ENCODE measurements at regions of chr3 and their contacts with region 1.

Region 1: DNA sequence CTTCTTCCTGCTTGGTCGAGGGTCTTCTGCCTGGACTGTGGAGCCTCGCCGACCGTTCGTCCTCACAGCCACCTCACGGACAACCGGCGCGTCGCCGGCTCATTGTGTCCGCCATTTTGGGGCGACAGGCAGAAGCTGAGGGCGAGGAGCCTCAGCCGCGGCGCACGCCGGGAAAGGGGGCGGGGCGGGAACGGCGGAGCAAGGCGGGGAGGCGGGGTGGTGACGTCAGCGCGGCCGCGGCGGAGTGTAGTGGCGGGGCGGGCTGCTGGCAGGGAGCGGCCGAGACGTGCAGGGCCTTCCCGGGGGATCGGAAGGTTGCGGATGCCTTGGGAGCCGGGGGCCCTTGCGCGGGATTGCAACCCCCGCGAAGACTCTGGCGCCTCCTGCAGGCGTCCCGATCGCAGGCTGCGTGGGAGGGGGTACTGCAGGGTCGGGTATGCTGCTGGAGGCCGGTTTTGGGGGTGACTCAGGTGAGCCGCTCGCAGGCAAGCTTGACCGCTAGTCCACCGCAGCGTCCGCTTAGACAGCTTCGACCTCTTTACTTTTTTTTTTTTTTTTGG is at the start of gene WDR82:
- DNase-seq: peak; percentile 98
- ATAC-seq: peak; percentile 72
- H3K4me3 Mint-ChIP-seq: peak within 1 kb of the TSS; percentile 99
- H3K27ac Mint-ChIP-seq: peak within 1 kb of the TSS; percentile 96
- H3K4me1 Mint-ChIP-seq: peaks cover 50% of the 10 kb centered on the region
- H3K27me3 Mint-ChIP-seq: no peaks in the 10 kb centered on the region
- CTCF ChIP-seq: peak; percentile 69
- total RNA-seq, gene WDR82: 103 to 105 TPM

Region 2: DNA sequence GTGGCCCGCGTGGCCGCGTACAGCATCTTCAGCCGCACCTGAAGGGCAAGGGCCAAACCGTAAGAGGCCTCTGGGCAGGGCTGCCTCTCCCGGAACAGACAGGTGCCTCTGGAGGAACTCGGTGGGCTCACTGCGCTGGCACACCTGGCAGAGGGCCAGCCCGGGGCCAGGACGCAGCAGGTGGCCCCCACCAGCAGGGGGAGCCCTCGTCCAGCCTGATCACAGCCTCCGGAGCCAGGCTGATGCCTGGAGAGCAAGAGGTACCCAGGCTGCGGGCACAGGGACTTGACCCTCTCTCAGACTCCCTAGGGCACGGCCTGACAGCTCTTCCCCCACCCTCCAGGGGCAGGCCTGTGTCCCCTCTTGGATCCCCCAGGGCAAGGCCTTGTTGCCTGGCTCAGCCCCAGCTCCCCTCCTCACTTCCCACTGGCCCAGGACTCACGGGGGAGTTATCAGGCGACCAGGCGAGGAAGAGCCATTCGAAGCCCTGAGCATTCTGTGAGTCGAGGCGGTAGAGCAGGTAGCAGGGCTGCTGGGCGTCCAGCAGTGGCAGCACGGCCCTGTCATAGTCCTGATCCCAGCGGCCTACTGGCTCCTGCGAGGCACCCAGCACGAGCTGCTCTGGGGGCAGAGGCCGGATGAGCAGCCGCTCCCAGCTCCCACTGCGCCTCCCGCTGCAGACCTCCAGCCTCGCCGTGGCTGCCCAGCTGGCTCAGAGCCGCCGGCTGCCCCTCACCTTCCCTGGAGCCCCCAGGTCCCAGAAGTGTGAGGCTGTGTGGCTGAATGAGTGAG is 46.9 kb before region 1 on chr3:
- CTCF ChIA-PET with region 1: interaction called, 84 read pairs
- POLR2A ChIA-PET with region 1: interaction called, 949 read pairs
- intact Hi-C with region 1: no loop called
- DNase-seq: peak; percentile 89
- ATAC-seq: peak; percentile 82
- H3K4me3 Mint-ChIP-seq: peak overlapping the region; percentile 8
- H3K27ac Mint-ChIP-seq: peak overlapping the region; percentile 82
- H3K4me1 Mint-ChIP-seq: peaks cover 62% of the 10 kb centered on the region
- H3K27me3 Mint-ChIP-seq: no peaks in the 10 kb centered on the region
- CTCF ChIP-seq: peak; percentile 96

Region 3: GRCh38 chr3:52238761-52239701 is 39.6 kb before region 1 on chr3 and contains the start of gene TWF2:
- CTCF ChIA-PET with region 1: interaction called, 65 read pairs
- POLR2A ChIA-PET with region 1: interaction called, 949 read pairs
- intact Hi-C with region 1: loop called (anchors 2 kb)
- DNase-seq: peak; percentile 91
- ATAC-seq: peak; percentile 74
- H3K4me3 Mint-ChIP-seq: peak within 1 kb of the TSS; percentile 99
- H3K27ac Mint-ChIP-seq: peak within 1 kb of the TSS; percentile 97
- H3K4me1 Mint-ChIP-seq: peaks cover 67% of the 10 kb centered on the region
- H3K27me3 Mint-ChIP-seq: no peaks in the 10 kb centered on the region
- CTCF ChIP-seq: peak; percentile 30
- total RNA-seq, gene TWF2: 137 TPM

Region 4: GRCh38 chr3:52253314-52254304 is 25.0 kb before region 1 on chr3:
- CTCF ChIA-PET with region 1: interaction called, 16 read pairs
- POLR2A ChIA-PET with region 1: interaction called, 949 read pairs
- intact Hi-C with region 1: no loop called
- DNase-seq: peak; percentile 96
- ATAC-seq: peak; percentile 88
- H3K4me3 Mint-ChIP-seq: peak overlapping the region; percentile 70
- H3K27ac Mint-ChIP-seq: peak overlapping the region; percentile 99
- H3K4me1 Mint-ChIP-seq: peaks cover 85% of the 10 kb centered on the region
- H3K27me3 Mint-ChIP-seq: no peaks in the 10 kb centered on the region
- CTCF ChIP-seq: no peak

Region 5: GRCh38 chr3:52259035-52259434 is 19.6 kb before region 1 on chr3:
- CTCF ChIA-PET with region 1: interaction called, 16 read pairs
- POLR2A ChIA-PET with region 1: interaction called, 65 read pairs
- intact Hi-C with region 1: no loop called
- DNase-seq: no peak
- ATAC-seq: no peak
- H3K4me3 Mint-ChIP-seq: no peak overlapping the region
- H3K27ac Mint-ChIP-seq: peak overlapping the region; percentile 79
- H3K4me1 Mint-ChIP-seq: peaks cover 92% of the 10 kb centered on the region
- H3K27me3 Mint-ChIP-seq: no peaks in the 10 kb centered on the region
- CTCF ChIP-seq: no peak

Region 6: GRCh38 chr3:52291508-52292181 is 13.1 kb after region 1 on chr3:
- CTCF ChIA-PET with region 1: interaction called, 5 read pairs
- POLR2A ChIA-PET with region 1: interaction called, 42 read pairs
- intact Hi-C with region 1: no loop called
- DNase-seq: peak; percentile 63
- ATAC-seq: peak; percentile 28
- H3K4me3 Mint-ChIP-seq: no peak overlapping the region
- H3K27ac Mint-ChIP-seq: no peak overlapping the region
- H3K4me1 Mint-ChIP-seq: peaks cover 22% of the 10 kb centered on the region
- H3K27me3 Mint-ChIP-seq: no peaks in the 10 kb centered on the region
- CTCF ChIP-seq: peak; percentile 78

Measured in activated CD8-positive, alpha-beta T cell treated with anti-CD3 and anti-CD28 coated beads for 36 hours (primary cell).